ENCODE measurements at regions of chr1 and their contacts with region 1.

Region 1: GRCh38 chr1:154669464-154670282 is 61.7 kb upstream of the ADAR start:
- DNase-seq: peak; percentile 78 to 90 (median 82)
- H3K4me3 ChIP-seq: no peak overlapping the region
- H3K27ac ChIP-seq: no peak overlapping the region
- H3K4me1 ChIP-seq: no peaks in the 10 kb centered on the region
- H3K27me3 ChIP-seq: no peaks in the 10 kb centered on the region
- CTCF ChIP-seq: peak; percentile 86

Region 2: GRCh38 chr1:154463512-154463990 is 206.1 kb before region 1 on chr1:
- intact Hi-C with region 1: no loop called
- DNase-seq: no peak
- H3K4me3 ChIP-seq: no peak overlapping the region
- H3K27ac ChIP-seq: peak overlapping the region; percentile 18 to 81
- H3K4me1 ChIP-seq: peaks cover 0 to 14% (median 10%) of the 10 kb centered on the region in 3 donors
- H3K27me3 ChIP-seq: no peaks in the 10 kb centered on the region
- CTCF ChIP-seq: no peak

Region 3: DNA sequence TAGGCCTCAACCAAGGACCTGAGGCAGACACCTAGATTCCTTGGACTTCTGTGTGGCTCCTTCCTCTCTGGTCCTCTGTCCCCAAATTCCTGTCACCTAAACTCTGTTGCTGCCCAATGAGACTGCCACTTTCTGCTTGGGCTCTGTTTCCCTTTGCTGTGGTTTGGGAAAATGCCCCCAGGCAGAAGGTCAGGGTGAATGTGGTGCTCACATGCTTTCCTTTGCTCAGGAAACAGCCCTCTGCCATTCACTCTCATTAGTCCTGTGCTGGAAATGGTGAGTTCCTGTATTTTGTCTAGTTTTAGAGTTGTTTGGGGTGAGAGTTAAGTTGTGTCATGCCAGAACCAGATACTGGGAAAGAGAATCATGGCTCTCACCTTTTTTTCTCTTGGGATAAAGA is 144.8 kb before region 1 on chr1:
- intact Hi-C with region 1: no loop called
- DNase-seq: no peak
- H3K4me3 ChIP-seq: no peak overlapping the region
- H3K27ac ChIP-seq: peak overlapping the region in 1 of 2 donors; percentile 28
- H3K4me1 ChIP-seq: peaks cover 0 to 1% (median 0%) of the 10 kb centered on the region in 3 donors
- H3K27me3 ChIP-seq: no peaks in the 10 kb centered on the region
- CTCF ChIP-seq: no peak

Region 4: GRCh38 chr1:154863315-154864174 is 193.9 kb after region 1 on chr1:
- intact Hi-C with region 1: no loop called
- DNase-seq: no peak
- H3K4me3 ChIP-seq: no peak overlapping the region
- H3K27ac ChIP-seq: no peak overlapping the region
- H3K4me1 ChIP-seq: peaks cover 0 to 12% (median 11%) of the 10 kb centered on the region in 3 donors
- H3K27me3 ChIP-seq: peaks cover 4% of the 10 kb centered on the region
- CTCF ChIP-seq: peak; percentile 31

Region 5: DNA sequence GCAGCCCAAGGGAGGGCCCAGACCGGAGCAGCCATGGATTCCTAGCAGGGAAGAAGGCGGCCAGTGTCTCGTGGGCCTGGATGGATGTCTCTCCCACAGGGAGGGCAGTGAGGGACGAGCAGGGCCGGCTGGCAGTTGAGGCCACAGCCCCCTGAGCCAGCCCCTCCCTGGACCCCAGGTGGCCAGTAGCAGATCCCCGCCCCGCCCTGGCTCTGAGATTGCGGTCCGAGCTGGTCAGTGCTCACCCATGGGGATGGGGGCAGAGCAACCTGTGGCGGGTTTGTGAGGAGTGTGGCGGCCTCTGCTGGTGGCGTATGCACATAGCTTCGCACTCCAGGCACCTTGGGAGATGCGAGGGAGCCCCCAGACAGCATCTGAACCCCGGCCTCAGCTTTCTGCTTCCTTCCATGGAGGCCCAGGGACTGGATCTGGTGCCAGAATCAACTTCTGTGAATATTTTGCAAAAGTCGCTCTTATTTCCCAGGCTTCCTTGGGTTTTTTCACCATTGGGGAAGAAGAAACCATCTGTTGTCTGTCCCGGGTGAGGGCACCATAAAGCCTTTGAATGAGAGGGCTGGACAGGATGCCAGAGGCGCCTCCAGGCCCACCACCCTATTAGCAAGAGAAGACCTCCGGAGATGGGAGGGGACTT is 208.8 kb after region 1 on chr1:
- intact Hi-C with region 1: loop called (anchors 5 kb)
- DNase-seq: peak; percentile 84 to 91 (median 88)
- H3K4me3 ChIP-seq: no peak overlapping the region
- H3K27ac ChIP-seq: no peak overlapping the region
- H3K4me1 ChIP-seq: peaks cover 0 to 2% (median 0%) of the 10 kb centered on the region in 3 donors
- H3K27me3 ChIP-seq: no peaks in the 10 kb centered on the region
- CTCF ChIP-seq: peak; percentile 89

Measured in kidney (tissue), 22 donors.